Endothelial cell of umbilical vein (primary cell): ENCODE measurements at regions of chr2 and their contacts with region 1.

Region 1: GRCh38 chr2:172172513-172173173 is 69.9 kb upstream of the DLX2 start:
- DNase-seq: peak; percentile 52
- H3K4me3 ChIP-seq: peak overlapping the region; percentile 12 to 50 (median 50)
- H3K27ac ChIP-seq: no peak overlapping the region
- H3K4me1 ChIP-seq: peaks cover 4% of the 10 kb centered on the region
- H3K27me3 ChIP-seq: no peaks in the 10 kb centered on the region
- CTCF ChIP-seq: peak; percentile 83 to 90
- POLR2A ChIP-seq: no peak

Region 2: DNA sequence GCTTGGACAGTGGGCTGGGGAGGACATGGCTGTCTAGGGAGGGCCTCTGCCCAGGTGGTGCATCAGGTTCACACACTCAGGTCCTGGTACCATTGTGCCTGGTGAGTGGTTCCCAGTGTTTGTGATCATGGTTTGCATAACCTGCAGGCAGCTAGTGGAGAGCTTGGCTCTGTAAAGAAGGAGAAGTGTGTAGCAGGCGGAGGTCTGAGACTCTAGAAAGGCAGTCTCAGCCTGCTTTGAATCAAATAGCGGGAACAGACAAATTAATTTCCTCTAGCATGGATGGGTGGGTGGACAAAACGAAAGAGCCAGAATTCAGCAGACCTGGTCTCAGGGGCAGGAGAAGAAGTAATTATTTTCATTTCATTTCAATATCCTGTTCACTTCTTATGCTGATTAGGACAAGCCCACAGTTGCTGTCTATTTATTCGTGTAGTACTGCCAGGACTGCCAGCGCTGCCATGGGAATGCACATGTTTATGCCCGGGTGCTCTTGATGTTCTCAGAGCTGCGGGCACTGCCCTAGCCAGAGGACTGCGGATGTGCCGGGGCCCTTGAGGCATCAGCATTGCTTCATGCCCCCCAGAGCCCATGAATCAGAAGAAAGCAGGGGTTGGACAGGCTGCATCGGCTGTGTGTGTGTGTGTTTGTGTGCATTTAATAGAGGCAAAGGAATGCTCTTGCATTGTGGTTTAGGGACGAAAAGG is 24.5 kb before region 1 on chr2:
- CTCF ChIA-PET with region 1: no interaction called
- POLR2A ChIA-PET with region 1: no interaction called
- dilution Hi-C with region 1: no loop called
- intact Hi-C with region 1: no loop called
- DNase-seq: no peak
- H3K4me3 ChIP-seq: no peak overlapping the region
- H3K27ac ChIP-seq: no peak overlapping the region
- H3K4me1 ChIP-seq: no peaks in the 10 kb centered on the region
- H3K27me3 ChIP-seq: peaks cover 3 to 7% of the 10 kb centered on the region in 2 experiments
- CTCF ChIP-seq: no peak
- POLR2A ChIP-seq: no peak

Region 3: DNA sequence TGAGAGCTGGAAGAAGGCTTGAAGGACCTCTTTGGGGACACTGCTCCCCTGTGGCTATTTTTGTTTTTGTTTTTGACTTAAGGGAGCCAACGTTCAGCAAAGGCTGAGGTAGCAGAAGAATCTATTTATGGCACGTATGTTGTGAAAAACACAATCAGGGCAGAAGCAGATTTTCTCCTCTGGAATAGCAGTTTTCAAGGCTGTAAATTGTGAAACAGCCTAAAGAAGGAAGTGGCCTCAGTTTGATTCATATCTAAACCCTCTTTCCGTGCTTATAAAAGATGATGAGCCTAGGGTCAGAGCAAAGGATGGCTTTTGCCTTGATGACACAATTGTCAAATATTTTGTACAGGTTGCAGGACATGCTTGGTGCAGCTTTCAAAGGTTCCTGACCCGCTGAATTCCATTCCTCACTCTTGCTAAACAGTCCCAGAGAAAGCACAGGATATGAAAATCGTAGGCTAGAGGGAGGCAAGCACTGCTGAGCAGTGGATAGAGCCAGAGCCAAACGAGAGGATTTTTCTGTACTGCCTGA is 36.2 kb after region 1 on chr2:
- CTCF ChIA-PET with region 1: interaction called, 11 read pairs
- POLR2A ChIA-PET with region 1: no interaction called
- dilution Hi-C with region 1: no loop called
- intact Hi-C with region 1: no loop called
- DNase-seq: peak; percentile 58
- H3K4me3 ChIP-seq: peak overlapping the region in 1 of 3 experiments; percentile 27
- H3K27ac ChIP-seq: peak overlapping the region; percentile 39
- H3K4me1 ChIP-seq: peaks cover 16% of the 10 kb centered on the region
- H3K27me3 ChIP-seq: no peaks in the 10 kb centered on the region
- CTCF ChIP-seq: no peak
- POLR2A ChIP-seq: no peak

Region 4: GRCh38 chr2:172307800-172308199 is 135.2 kb after region 1 on chr2:
- CTCF ChIA-PET with region 1: interaction called, 3 read pairs
- POLR2A ChIA-PET with region 1: no interaction called
- dilution Hi-C with region 1: no loop called
- intact Hi-C with region 1: loop called (anchors 5 kb)
- DNase-seq: peak; percentile 94
- H3K4me3 ChIP-seq: no peak overlapping the region
- H3K27ac ChIP-seq: peak overlapping the region; percentile 88
- H3K4me1 ChIP-seq: peaks cover 31% of the 10 kb centered on the region
- H3K27me3 ChIP-seq: no peaks in the 10 kb centered on the region
- CTCF ChIP-seq: no peak
- POLR2A ChIP-seq: no peak

Region 5: DNA sequence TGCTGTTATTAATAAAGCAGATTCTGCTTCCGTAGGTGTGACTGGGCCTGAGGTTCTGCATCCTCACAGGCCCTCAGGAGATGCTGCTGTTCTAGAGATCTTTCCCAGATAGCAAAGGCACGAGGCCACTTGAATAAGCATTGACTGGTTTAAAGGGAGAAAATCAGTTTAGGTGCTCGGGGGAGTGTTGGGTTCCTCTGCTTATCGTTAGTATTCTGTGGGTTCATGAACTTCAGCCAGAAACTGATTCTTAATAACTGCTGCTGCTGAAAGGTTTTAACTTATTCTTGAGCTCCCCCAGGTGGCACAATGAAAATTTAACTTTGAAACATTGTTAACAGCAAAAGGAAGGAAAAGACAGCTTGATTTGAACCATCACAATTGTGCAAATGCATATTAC is 311.6 kb after region 1 on chr2:
- CTCF ChIA-PET with region 1: interaction called, 32 read pairs
- POLR2A ChIA-PET with region 1: no interaction called
- dilution Hi-C with region 1: no loop called
- intact Hi-C with region 1: loop called (anchors 1 kb)
- DNase-seq: peak; percentile 55
- H3K4me3 ChIP-seq: no peak overlapping the region
- H3K27ac ChIP-seq: no peak overlapping the region
- H3K4me1 ChIP-seq: peaks cover 22% of the 10 kb centered on the region
- H3K27me3 ChIP-seq: no peaks in the 10 kb centered on the region
- CTCF ChIP-seq: no peak
- POLR2A ChIP-seq: no peak